Panc1 (cell line): ENCODE measurements at regions of chr3 and their contacts with region 1.

Region 1: GRCh38 chr3:187679638-187680396 is 9.6 kb upstream of the SST start:
- DNase-seq: peak; percentile 62
- ATAC-seq: peak; percentile 93
- H3K4me3 ChIP-seq: no peak overlapping the region
- H3K27ac ChIP-seq: peak overlapping the region; percentile 59
- H3K4me1 ChIP-seq: peaks cover 9% of the 10 kb centered on the region; the same call in 1 of the 2 replicates
- H3K27me3 ChIP-seq: peaks cover 2% of the 10 kb centered on the region; the same call in 1 of the 2 replicates
- CTCF ChIP-seq: peak; percentile 95

Region 2: GRCh38 chr3:187197057-187197649 is 482.7 kb before region 1 on chr3 and contains the start of gene RTP1:
- CTCF ChIA-PET with region 1: interaction called, 13 read pairs
- POLR2A ChIA-PET with region 1: no interaction called
- in situ Hi-C with region 1: no loop called
- intact Hi-C with region 1: no loop called
- DNase-seq: no peak
- ATAC-seq: no peak
- H3K4me3 ChIP-seq: no peak within 1 kb of the TSS
- H3K27ac ChIP-seq: no peak within 1 kb of the TSS
- H3K4me1 ChIP-seq: no peaks in the 10 kb centered on the region
- H3K27me3 ChIP-seq: peaks cover 14% of the 10 kb centered on the region; the same call in 1 of the 2 replicates
- CTCF ChIP-seq: no peak
- total RNA-seq, gene RTP1: not detected

Region 3: GRCh38 chr3:187223799-187224198 is 456.0 kb before region 1 on chr3:
- CTCF ChIA-PET with region 1: interaction called, 50 read pairs
- POLR2A ChIA-PET with region 1: interaction called, 4 read pairs
- in situ Hi-C with region 1: no loop called
- intact Hi-C with region 1: loop called (anchors 1 kb)
- DNase-seq: no peak
- ATAC-seq: no peak
- H3K4me3 ChIP-seq: no peak overlapping the region
- H3K27ac ChIP-seq: no peak overlapping the region
- H3K4me1 ChIP-seq: no peaks in the 10 kb centered on the region
- H3K27me3 ChIP-seq: no peaks in the 10 kb centered on the region
- CTCF ChIP-seq: no peak

Region 4: GRCh38 chr3:187319699-187320302 is 360.0 kb before region 1 on chr3:
- CTCF ChIA-PET with region 1: interaction called, 152 read pairs
- POLR2A ChIA-PET with region 1: no interaction called
- in situ Hi-C with region 1: loop called (anchors 25 kb)
- intact Hi-C with region 1: loop called (anchors 1 kb)
- DNase-seq: peak; percentile 73
- ATAC-seq: peak; percentile 92
- H3K4me3 ChIP-seq: no peak overlapping the region
- H3K27ac ChIP-seq: peak overlapping the region; percentile 83
- H3K4me1 ChIP-seq: peaks cover 15% of the 10 kb centered on the region
- H3K27me3 ChIP-seq: peaks cover 7% of the 10 kb centered on the region; the same call in 1 of the 2 replicates
- CTCF ChIP-seq: peak; percentile 97

Region 5: GRCh38 chr3:187398955-187399354 is 280.9 kb before region 1 on chr3:
- CTCF ChIA-PET with region 1: no interaction called
- POLR2A ChIA-PET with region 1: no interaction called
- in situ Hi-C with region 1: no loop called
- intact Hi-C with region 1: loop called (anchors 5 kb)
- DNase-seq: no peak
- ATAC-seq: no peak
- H3K4me3 ChIP-seq: no peak overlapping the region
- H3K27ac ChIP-seq: peak overlapping the region; percentile 51; the same call in 1 of the 2 replicates
- H3K4me1 ChIP-seq: peaks cover 14% of the 10 kb centered on the region
- H3K27me3 ChIP-seq: no peaks in the 10 kb centered on the region
- CTCF ChIP-seq: no peak

Region 6: DNA sequence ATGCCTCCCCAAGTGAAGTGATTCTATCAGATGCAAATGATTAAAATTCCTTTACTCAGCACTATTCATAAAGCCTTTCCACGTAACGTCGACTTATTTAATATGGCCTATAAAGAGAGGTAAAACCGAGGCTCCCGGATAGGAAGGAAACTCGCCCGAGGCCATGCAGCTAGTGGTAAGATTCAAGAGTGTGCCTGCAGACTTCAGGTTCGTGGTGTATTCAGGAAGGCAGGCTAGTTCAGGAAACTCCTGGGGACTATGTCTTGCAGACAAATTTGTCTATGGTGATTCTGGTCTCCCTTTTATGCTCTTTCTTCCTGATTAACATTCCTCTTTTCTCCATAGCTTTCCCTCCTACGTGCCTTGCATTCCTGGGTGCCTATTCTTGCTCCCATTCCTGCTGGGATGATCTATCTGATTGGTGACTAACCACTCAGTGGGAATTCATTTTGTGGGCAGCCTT is 160.4 kb before region 1 on chr3:
- CTCF ChIA-PET with region 1: no interaction called
- POLR2A ChIA-PET with region 1: no interaction called
- in situ Hi-C with region 1: no loop called
- intact Hi-C with region 1: no loop called
- DNase-seq: no peak
- ATAC-seq: no peak
- H3K4me3 ChIP-seq: no peak overlapping the region
- H3K27ac ChIP-seq: no peak overlapping the region
- H3K4me1 ChIP-seq: no peaks in the 10 kb centered on the region
- H3K27me3 ChIP-seq: no peaks in the 10 kb centered on the region
- CTCF ChIP-seq: no peak

Region 7: DNA sequence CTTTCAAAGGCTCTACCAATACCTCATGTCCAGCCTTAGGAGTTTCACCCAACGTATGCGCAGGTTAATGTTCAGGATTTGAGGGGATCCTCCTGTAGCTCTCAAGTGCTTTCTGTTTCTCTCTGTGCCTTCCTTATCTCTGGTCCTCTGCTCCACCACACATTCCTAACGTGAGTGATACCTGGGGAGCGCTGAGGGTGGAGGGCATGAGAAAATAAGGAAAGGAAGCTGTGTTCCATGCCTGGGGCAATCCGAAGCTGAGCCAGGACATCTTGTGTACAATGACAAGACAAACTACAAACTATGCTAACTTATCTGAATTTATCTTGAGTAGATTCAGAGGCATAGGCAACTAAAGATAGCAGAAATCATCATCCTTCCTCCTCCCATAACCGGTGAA is 146.0 kb before region 1 on chr3:
- CTCF ChIA-PET with region 1: no interaction called
- POLR2A ChIA-PET with region 1: no interaction called
- in situ Hi-C with region 1: no loop called
- intact Hi-C with region 1: no loop called
- DNase-seq: no peak
- ATAC-seq: no peak
- H3K4me3 ChIP-seq: no peak overlapping the region
- H3K27ac ChIP-seq: no peak overlapping the region
- H3K4me1 ChIP-seq: no peaks in the 10 kb centered on the region
- H3K27me3 ChIP-seq: no peaks in the 10 kb centered on the region; the same call in 1 of the 2 replicates
- CTCF ChIP-seq: no peak

Region 8: DNA sequence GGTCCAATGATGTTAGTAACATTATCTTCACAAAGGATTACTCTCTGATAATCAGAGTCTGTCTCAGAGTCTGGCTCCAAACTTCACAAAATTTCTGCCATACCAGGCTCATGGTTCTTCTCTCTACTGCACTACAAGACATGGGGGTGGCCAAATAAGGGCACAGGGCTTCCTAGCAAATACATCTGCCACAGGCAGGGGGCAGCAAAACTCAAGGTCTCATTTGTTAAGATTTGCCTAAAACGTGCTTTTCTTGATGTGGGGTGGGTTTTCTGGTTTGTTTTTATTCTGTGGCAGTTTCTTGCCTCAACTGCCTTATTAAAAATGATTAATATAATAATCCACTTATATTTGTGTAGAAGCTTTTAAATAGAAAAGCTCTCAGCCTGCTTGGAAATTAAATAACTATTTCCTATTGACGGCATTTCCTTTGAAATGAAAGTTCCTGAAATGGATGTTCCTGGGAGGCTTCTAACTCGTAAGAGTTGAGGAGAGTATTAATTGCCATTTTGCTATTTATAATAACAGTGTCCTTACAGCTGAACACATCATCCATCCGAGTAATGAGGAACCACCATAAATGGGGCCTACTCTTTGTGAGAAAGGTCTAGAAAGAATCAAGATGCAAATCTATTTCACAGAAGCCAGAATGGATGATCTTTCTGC is 63.4 kb before region 1 on chr3:
- CTCF ChIA-PET with region 1: interaction called, 4 read pairs
- POLR2A ChIA-PET with region 1: no interaction called
- in situ Hi-C with region 1: no loop called
- intact Hi-C with region 1: loop called (anchors 2 kb)
- DNase-seq: peak; percentile 18
- ATAC-seq: peak; percentile 79; the same call in 1 of the 2 replicates
- H3K4me3 ChIP-seq: no peak overlapping the region
- H3K27ac ChIP-seq: 0 out of 2 replicates have a peak overlapping the region, but pooled peaks have one; percentile 20
- H3K4me1 ChIP-seq: no peaks in the 10 kb centered on the region
- H3K27me3 ChIP-seq: no peaks in the 10 kb centered on the region
- CTCF ChIP-seq: peak; percentile 87

Region 9: GRCh38 chr3:187738331-187739093 is 58.7 kb after region 1 on chr3:
- CTCF ChIA-PET with region 1: no interaction called
- POLR2A ChIA-PET with region 1: no interaction called
- in situ Hi-C with region 1: no loop called
- intact Hi-C with region 1: no loop called
- DNase-seq: peak; percentile 88
- ATAC-seq: peak; percentile 75
- H3K4me3 ChIP-seq: peak overlapping the region; percentile 59 to 94
- H3K27ac ChIP-seq: peak overlapping the region; percentile 79
- H3K4me1 ChIP-seq: peaks cover 45% of the 10 kb centered on the region
- H3K27me3 ChIP-seq: no peaks in the 10 kb centered on the region
- CTCF ChIP-seq: peak; percentile 92